H1 (cell line): ENCODE measurements at regions of chr3 and their contacts with region 1.

Region 1: GRCh38 chr3:13895155-13896105 is 15.6 kb upstream of the WNT7A start:
- DNase-seq: peak; percentile 82 to 98
- H3K4me3 ChIP-seq: peak overlapping the region; percentile 57 to 79 (median 64)
- H3K27ac ChIP-seq: no peak overlapping the region
- H3K4me1 ChIP-seq: peaks cover 0 to 13% (median 8%) of the 10 kb centered on the region in 4 experiments; a peak in 4 of 7 replicates
- H3K27me3 ChIP-seq: peaks cover 8 to 24% (median 20%) of the 10 kb centered on the region in 4 experiments
- CTCF ChIP-seq: no peak
- EP300 ChIP-seq: no peak
- POLR2A ChIP-seq: no peak
- RAD21 ChIP-seq: no peak

Region 2: DNA sequence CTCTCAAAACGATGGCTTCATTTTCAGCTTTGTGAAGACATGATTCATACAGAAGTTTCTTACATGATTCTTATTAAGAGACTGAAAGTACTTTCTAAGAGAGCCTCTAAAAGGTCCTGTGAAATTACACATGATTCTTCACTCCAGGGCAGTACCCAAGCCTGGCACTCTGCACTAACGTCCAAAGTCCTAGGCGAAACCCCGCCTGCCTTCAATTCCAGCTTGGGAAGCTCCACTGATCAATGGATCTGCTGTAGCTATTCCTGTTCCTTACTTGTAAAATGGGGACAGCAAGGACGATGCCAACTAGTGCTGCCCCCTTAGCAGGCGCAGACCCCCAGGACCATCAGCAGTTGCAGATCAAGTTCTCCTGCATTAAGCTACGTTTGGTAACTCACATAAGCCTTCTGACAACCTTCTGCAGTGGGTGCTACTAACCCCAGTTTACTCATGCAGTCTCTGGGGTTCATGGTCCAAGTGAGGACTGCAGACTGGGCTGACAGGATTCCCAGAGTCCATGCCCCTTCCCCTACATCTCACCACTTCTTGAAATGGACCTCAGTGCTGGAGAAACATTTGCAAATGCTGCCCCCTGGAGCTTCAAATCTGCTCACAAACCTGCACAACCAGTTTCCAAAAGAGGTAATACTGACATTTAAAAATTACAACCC is 218.7 kb after region 1 on chr3:
- CTCF ChIA-PET with region 1: interaction called, 123 read pairs
- POLR2A ChIA-PET with region 1: interaction called, 4 read pairs
- DNase-seq: peak in 1 of 2 experiments; percentile 41
- H3K4me3 ChIP-seq: no peak overlapping the region
- H3K27ac ChIP-seq: no peak overlapping the region
- H3K4me1 ChIP-seq: no peaks in the 10 kb centered on the region
- H3K27me3 ChIP-seq: no peaks in the 10 kb centered on the region
- CTCF ChIP-seq: peak in 2 of 3 experiments; percentile 31 to 45; a peak in 3 of 4 replicates
- EP300 ChIP-seq: no peak
- POLR2A ChIP-seq: no peak
- RAD21 ChIP-seq: peak; percentile 58 to 75

Region 3: DNA sequence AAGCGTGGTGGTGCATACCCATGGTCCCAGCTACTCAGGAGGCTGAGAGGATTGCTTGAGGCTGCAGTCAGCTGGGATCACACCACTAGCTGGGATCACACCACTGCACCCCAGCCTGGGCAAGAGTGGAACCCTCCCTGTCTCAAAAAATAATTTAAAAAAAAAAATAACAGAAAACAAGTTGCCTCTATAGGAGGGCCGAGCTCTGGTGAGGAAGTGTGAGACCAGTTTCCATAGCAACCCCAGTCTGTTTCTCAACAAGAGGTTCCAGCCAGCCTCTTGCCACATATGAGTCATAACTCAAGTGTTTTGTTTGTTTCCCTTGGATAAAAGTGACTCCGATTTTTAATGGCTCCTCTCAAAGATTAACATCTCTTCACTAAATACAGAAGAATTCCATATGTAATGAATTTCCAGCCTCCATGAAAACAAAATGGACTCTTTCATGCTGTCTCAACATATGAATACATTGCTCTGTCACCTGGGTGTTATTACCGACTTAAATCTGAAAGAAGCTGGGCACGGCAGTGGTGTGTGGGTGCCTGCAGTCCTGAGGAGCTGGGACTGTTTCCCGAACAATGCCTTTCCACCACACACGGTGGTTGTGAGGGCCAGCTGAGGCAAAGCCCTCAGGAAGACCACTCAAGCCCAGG is 249.1 kb after region 1 on chr3:
- CTCF ChIA-PET with region 1: interaction called, 24 read pairs
- POLR2A ChIA-PET with region 1: interaction called, 9 read pairs
- DNase-seq: no peak
- H3K4me3 ChIP-seq: no peak overlapping the region
- H3K27ac ChIP-seq: peak overlapping the region; percentile 72; the same call in 1 of the 2 replicates
- H3K4me1 ChIP-seq: peaks cover 0 to 14% (median 9%) of the 10 kb centered on the region in 4 experiments; a peak in 6 of 7 replicates
- H3K27me3 ChIP-seq: no peaks in the 10 kb centered on the region
- CTCF ChIP-seq: no peak
- EP300 ChIP-seq: no peak
- POLR2A ChIP-seq: no peak
- RAD21 ChIP-seq: no peak

Region 4: DNA sequence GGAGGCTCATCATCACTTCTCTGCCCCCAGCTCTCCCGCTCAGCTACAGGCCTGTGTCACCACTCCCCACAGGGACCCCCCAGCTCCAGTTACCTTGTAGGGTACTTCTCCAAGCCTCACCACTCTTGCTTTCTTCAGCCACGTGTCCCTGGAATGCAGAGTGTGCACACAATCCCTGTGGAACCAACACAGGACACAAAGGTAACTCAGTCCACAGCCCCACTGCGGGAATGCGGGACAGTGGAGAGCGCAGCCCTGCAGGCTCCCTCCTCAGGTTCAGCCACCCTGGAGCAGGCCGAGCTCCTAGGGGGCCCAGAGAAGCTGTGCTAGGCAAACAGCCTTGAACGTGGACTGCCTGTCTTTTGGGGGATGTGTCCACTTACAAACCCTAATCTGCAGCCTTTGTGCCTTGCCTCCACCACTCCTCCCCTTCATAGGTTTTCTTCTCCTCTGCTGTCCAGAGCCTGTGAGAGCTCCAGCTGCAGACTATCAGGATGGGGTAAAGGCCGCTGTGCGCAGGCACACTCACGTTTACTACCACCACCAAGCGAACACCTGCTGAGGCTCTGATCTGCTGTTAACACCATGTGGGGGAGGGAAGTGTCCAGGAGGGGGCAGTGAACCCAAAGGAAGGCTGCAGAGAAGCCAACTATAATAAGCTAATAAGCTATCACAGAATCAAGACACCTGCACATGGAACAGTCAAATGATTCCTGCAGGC is 257.0 kb after region 1 on chr3:
- CTCF ChIA-PET with region 1: interaction called, 24 read pairs
- POLR2A ChIA-PET with region 1: interaction called, 3 read pairs
- DNase-seq: no peak
- H3K4me3 ChIP-seq: no peak overlapping the region
- H3K27ac ChIP-seq: no peak overlapping the region
- H3K4me1 ChIP-seq: peaks cover 0 to 14% (median 9%) of the 10 kb centered on the region in 4 experiments; a peak in 6 of 7 replicates
- H3K27me3 ChIP-seq: no peaks in the 10 kb centered on the region
- CTCF ChIP-seq: peak; percentile 17 to 33 (median 27); a peak in 2 of 4 replicates
- EP300 ChIP-seq: no peak
- POLR2A ChIP-seq: no peak
- RAD21 ChIP-seq: peak in 1 of 2 experiments; percentile 33; a peak in 2 of 4 replicates